SK-N-SH (cell line): ENCODE measurements at regions of chrX and their contacts with region 1.

Region 1: GRCh38 chrX:153609917-153610428 is 11.0 kb upstream of the CCNQ start:
- DNase-seq: peak; percentile 88
- H3K4me3 ChIP-seq: peak overlapping the region; percentile 35 to 37; a peak in 2 of 4 replicates
- H3K27ac ChIP-seq: peak overlapping the region in 1 of 2 experiments; percentile 64; a peak in 2 of 4 replicates
- H3K4me1 ChIP-seq: peaks cover 0 to 10% of the 10 kb centered on the region in 2 experiments; a peak in 1 of 4 replicates
- H3K27me3 ChIP-seq: peaks cover 55% of the 10 kb centered on the region
- CTCF ChIP-seq: peak; percentile 79
- EP300 ChIP-seq: no peak
- RAD21 ChIP-seq: peak; percentile 73

Region 2: DNA sequence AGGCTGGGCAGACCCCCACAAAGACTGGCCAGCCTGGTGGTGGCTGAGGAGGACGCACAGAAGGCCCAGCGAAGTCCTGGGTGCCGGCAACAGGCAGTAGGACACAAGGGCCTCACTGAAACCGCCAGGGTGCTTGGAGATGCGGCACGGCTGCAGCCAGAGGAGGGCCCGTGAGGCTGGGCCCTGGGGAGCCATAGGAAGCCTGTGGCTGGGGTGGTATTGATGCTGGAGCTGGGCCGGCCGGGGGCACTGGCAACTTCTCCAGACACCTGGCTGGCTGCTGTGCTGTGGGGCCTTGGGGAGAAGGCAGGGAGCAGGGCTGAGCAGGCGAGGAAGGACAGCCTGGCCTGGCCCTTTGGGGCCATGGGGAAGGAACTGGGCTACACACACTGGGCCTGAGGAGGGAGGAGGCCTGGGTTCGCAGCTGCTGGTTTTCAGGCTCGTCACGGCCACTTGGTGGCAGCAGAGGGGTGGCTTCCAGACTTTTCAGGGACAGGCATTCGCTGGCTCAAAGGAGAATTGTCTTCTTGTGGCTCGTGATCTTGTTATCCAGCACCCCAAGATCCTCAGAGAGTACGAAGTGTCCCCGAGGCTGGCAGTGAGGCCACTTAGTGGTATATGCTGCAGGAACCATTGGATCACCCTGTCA is 55.3 kb before region 1 on chrX:
- CTCF ChIA-PET with region 1: interaction called, 27 read pairs
- POLR2A ChIA-PET with region 1: no interaction called
- DNase-seq: peak; percentile 85
- H3K4me3 ChIP-seq: no peak overlapping the region
- H3K27ac ChIP-seq: no peak overlapping the region
- H3K4me1 ChIP-seq: no peaks in the 10 kb centered on the region
- H3K27me3 ChIP-seq: peaks cover 74% of the 10 kb centered on the region
- CTCF ChIP-seq: peak; percentile 77
- EP300 ChIP-seq: no peak
- RAD21 ChIP-seq: peak; percentile 80

Region 3: DNA sequence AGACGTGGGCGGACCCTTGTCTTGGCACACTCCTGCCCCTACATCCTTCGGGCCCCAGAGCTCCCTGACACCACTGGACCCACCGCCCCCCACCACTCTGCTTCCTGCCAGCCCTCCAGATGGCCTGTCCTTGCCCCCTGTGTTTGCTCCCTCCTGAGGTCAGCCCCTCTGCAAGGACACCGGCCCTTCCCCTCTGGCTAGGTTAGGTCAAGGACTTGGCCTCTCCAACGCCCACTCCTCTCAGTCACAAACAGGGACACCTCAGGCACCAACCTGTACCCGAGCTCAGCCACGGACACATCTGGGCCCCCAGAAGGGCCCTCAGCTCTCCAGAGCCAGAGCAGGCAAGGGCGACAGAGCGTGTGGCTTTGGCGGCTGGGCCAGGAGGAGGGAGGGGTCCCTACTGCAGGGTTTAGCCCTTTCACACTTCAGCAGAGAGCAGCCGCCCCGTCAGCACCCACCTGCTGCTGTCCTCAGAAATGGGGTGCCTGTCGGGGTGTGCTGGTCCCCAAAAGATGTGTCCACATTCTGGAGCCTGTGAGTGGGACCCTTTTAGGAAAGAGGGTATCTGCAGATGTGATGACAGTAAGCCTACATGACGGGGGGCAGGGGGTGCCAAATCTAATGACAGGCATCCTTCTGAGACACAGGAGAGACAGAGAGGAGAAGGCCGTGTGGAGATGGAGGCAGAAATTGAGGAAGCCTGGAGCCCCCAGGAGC is 13.5 kb after region 1 on chrX:
- CTCF ChIA-PET with region 1: interaction called, 11 read pairs
- POLR2A ChIA-PET with region 1: no interaction called
- DNase-seq: no peak
- H3K4me3 ChIP-seq: no peak overlapping the region
- H3K27ac ChIP-seq: no peak overlapping the region
- H3K4me1 ChIP-seq: no peaks in the 10 kb centered on the region; a peak in 1 of 4 replicates
- H3K27me3 ChIP-seq: peaks cover 61% of the 10 kb centered on the region
- CTCF ChIP-seq: no peak
- EP300 ChIP-seq: no peak
- RAD21 ChIP-seq: no peak

Region 4: GRCh38 chrX:153643431-153644351 is 33.7 kb after region 1 on chrX:
- CTCF ChIA-PET with region 1: interaction called, 22 read pairs
- POLR2A ChIA-PET with region 1: no interaction called
- DNase-seq: peak; percentile 83
- H3K4me3 ChIP-seq: peak overlapping the region; percentile 32 to 35; a peak in 3 of 4 replicates
- H3K27ac ChIP-seq: no peak overlapping the region
- H3K4me1 ChIP-seq: peaks cover 0 to 15% of the 10 kb centered on the region in 2 experiments; a peak in 1 of 4 replicates
- H3K27me3 ChIP-seq: peaks cover 69% of the 10 kb centered on the region
- CTCF ChIP-seq: peak; percentile 26; the same call in 1 of the 2 replicates
- EP300 ChIP-seq: no peak
- RAD21 ChIP-seq: no peak

Region 5: DNA sequence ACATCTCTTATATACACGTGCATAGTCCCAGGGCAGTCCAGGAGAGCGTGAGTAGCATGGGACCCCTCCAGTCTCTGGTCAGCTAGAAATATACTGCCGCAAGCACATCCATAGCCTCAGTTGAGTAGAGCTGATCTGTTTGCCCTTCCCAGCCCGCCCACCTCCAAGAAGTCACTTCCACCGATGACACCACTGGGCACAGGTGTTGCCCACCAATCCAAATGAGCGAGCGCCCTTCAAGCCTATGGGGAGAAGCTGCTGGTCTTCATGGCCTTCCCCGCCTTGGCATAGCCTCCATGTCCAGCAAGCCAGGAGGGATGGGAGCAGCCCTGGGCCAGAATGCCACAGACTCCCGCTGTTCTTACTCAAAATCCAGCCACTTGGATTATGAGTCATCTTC is 47.2 kb after region 1 on chrX:
- CTCF ChIA-PET with region 1: interaction called, 128 read pairs
- POLR2A ChIA-PET with region 1: no interaction called
- DNase-seq: no peak
- H3K4me3 ChIP-seq: no peak overlapping the region
- H3K27ac ChIP-seq: no peak overlapping the region
- H3K4me1 ChIP-seq: no peaks in the 10 kb centered on the region
- H3K27me3 ChIP-seq: peaks cover 10% of the 10 kb centered on the region; the same call in 1 of the 2 replicates
- CTCF ChIP-seq: no peak
- EP300 ChIP-seq: no peak
- RAD21 ChIP-seq: no peak

Region 6: DNA sequence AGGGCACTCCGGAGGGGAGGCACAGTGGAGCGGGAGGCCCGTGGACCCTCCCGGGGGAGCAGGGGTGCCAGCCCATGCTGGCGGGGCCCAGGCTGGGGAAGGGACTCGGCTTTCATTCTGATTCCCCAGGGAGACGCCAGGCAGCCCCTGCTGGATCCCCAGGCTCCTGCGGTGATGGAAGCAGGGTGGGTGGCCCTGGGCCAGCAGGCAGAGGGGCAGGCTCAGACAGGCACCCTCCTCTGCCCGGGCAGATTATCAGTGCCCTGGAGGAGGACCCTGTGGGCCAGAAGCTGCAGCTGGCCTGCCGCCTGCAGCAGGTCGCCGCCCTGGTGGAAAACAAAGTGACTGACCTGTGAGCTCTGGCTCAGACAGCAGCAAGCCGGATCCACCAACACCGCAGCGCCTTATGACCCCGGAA is 168.7 kb after region 1 on chrX:
- CTCF ChIA-PET with region 1: no interaction called
- POLR2A ChIA-PET with region 1: no interaction called
- DNase-seq: no peak
- H3K4me3 ChIP-seq: no peak overlapping the region
- H3K27ac ChIP-seq: no peak overlapping the region
- H3K4me1 ChIP-seq: peaks cover 0 to 12% of the 10 kb centered on the region in 2 experiments; a peak in 1 of 4 replicates
- H3K27me3 ChIP-seq: 0 out of 2 replicates have a peak, but pooled peaks cover 7% of the 10 kb centered on the region
- CTCF ChIP-seq: peak; percentile 22; the same call in 1 of the 2 replicates
- EP300 ChIP-seq: no peak
- RAD21 ChIP-seq: no peak

Region 7: GRCh38 chrX:154355776-154356140 is 745.8 kb after region 1 on chrX:
- CTCF ChIA-PET with region 1: no interaction called
- POLR2A ChIA-PET with region 1: no interaction called
- DNase-seq: no peak
- H3K4me3 ChIP-seq: no peak overlapping the region
- H3K27ac ChIP-seq: no peak overlapping the region
- H3K4me1 ChIP-seq: no peaks in the 10 kb centered on the region
- H3K27me3 ChIP-seq: no peaks in the 10 kb centered on the region
- CTCF ChIP-seq: 0 out of 2 replicates have a peak, but pooled peaks have one; percentile 16
- EP300 ChIP-seq: no peak
- RAD21 ChIP-seq: no peak